Posterior vena cava (tissue), 2 donors: ENCODE measurements at regions of chr3 and their contacts with region 1.

Region 1: GRCh38 chr3:156519758-156520162 is 35.2 kb downstream of the SSR3 start:
- DNase-seq: no peak

Region 2: GRCh38 chr3:156535162-156535627 is 15.4 kb after region 1 on chr3:
- intact Hi-C with region 1: no loop called
- DNase-seq: peak; percentile 86

Region 3: DNA sequence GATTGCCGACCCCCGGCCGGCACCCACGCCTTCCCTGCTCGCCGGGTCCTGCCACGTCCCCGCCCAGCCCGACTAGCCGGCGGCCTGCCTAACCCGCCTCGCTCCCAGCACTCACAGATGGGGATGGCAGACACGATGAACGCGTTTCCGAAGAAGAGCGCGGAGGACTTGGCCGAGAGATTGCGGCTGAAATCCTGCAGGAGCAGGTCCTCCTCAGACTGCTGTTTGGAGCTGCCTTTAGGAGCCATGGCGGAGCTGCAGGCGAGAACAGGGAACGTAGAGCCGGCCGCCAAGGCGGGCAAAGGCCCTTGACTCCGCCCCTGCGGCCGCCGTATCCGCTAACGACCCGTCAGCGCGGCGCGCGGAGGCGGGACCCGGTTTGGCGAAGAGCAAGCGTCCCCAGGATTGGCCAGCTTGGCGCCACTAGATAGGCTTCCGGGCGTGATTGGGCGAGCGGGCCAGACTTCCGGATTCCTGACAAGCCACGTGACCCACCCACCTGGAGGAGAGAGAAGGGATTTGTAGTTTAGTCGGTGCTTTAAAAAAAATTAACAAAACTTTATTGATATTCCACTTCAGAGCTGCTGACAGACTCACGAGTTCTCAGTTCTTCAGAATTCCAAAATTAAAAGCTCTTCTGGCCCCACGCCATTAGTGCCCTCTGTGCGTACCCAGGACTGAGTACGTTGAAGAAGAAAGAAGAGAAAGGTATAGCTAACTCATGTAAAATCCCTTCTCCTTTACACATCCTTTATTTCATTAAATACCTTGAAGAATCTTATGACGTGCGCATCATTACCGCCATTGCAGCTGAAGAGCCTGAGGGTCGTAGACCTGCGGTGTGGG is 35.3 kb after region 1 on chr3 and contains the start of gene SSR3:
- intact Hi-C with region 1: no loop called
- DNase-seq: peak; percentile 100
- total RNA-seq, gene SSR3: 150 to 171 TPM

Region 4: GRCh38 chr3:157130467-157131251 is 610.9 kb after region 1 on chr3:
- intact Hi-C with region 1: loop called in 1 of 2 experiments (anchors 10 kb)
- DNase-seq: no peak